Activated CD4-positive, alpha-beta T cell treated with anti-CD3 and anti-CD28 coated beads, Interleukin-2, amount 10 ng/mL, durations not matched to agents 7 days and 5 days (primary cell): ENCODE measurements at regions of chr17 and their contacts with region 1.

Region 1: DNA sequence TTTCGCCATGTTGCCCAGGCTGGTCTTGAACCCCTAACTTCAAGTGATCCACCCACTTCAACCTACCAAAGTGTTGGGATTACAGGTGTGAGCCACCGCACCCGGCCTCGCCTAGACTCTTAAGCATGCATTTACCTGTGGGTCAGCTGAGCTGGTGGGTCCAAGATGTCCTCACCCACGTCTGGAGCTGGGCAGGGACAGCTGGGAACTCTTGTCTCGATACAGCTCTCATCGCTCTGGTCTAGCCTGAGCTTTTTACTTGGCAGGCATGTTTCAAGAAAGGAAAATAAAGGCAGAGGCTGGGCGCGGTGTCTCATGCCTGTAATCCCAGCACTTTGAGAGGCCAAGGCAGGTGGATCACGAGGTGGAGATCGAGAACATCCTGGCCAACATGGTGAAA is 56.9 kb upstream of the PHOSPHO1 start:
- DNase-seq: no peak
- H3K4me3 Mint-ChIP-seq: no peak overlapping the region
- H3K27ac Mint-ChIP-seq: no peak overlapping the region
- H3K4me1 Mint-ChIP-seq: no peaks in the 10 kb centered on the region
- H3K27me3 Mint-ChIP-seq: no peaks in the 10 kb centered on the region

Region 2: GRCh38 chr17:49249292-49249794 is 38.1 kb before region 1 on chr17:
- CTCF ChIA-PET with region 1: no interaction called
- POLR2A ChIA-PET with region 1: no interaction called
- DNase-seq: no peak
- H3K4me3 Mint-ChIP-seq: no peak overlapping the region
- H3K27ac Mint-ChIP-seq: no peak overlapping the region
- H3K4me1 Mint-ChIP-seq: no peaks in the 10 kb centered on the region
- H3K27me3 Mint-ChIP-seq: peaks cover 11% of the 10 kb centered on the region

Region 3: DNA sequence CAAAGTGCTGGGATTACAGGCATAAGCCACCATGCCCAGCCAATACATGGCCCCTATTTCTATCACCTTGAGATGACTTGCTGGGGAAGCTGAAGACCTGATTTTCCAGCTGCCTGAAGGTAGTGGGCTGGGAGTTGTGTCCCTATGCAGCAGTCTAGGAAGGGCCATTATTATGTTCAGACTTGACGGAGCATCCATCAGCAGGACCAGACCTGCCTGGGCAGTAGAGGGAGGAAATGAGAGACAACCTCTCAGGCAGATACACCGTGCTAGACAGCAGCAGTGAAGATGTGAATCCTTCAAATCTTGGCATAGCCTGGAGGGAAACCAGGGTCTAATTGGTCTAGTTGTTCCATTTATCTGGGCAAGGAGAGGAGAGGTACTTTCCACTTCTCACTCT is 21.2 kb before region 1 on chr17:
- CTCF ChIA-PET with region 1: no interaction called
- POLR2A ChIA-PET with region 1: interaction called, 10 read pairs
- DNase-seq: no peak
- H3K4me3 Mint-ChIP-seq: no peak overlapping the region
- H3K27ac Mint-ChIP-seq: no peak overlapping the region
- H3K4me1 Mint-ChIP-seq: peaks cover 1% of the 10 kb centered on the region
- H3K27me3 Mint-ChIP-seq: peaks cover 6% of the 10 kb centered on the region

Region 4: GRCh38 chr17:49439673-49440571 is 152.4 kb after region 1 on chr17:
- CTCF ChIA-PET with region 1: no interaction called
- POLR2A ChIA-PET with region 1: no interaction called
- DNase-seq: no peak
- H3K4me3 Mint-ChIP-seq: no peak overlapping the region
- H3K27ac Mint-ChIP-seq: no peak overlapping the region
- H3K4me1 Mint-ChIP-seq: no peaks in the 10 kb centered on the region
- H3K27me3 Mint-ChIP-seq: peaks cover 36% of the 10 kb centered on the region

Region 5: GRCh38 chr17:49508061-49508865 is 220.8 kb after region 1 on chr17:
- CTCF ChIA-PET with region 1: no interaction called
- POLR2A ChIA-PET with region 1: no interaction called
- DNase-seq: no peak
- H3K4me3 Mint-ChIP-seq: no peak overlapping the region
- H3K27ac Mint-ChIP-seq: no peak overlapping the region
- H3K4me1 Mint-ChIP-seq: no peaks in the 10 kb centered on the region
- H3K27me3 Mint-ChIP-seq: peaks cover 20% of the 10 kb centered on the region